GM10248 (cell line): ENCODE measurements at regions of chr20 and their contacts with region 1.

Region 1: DNA sequence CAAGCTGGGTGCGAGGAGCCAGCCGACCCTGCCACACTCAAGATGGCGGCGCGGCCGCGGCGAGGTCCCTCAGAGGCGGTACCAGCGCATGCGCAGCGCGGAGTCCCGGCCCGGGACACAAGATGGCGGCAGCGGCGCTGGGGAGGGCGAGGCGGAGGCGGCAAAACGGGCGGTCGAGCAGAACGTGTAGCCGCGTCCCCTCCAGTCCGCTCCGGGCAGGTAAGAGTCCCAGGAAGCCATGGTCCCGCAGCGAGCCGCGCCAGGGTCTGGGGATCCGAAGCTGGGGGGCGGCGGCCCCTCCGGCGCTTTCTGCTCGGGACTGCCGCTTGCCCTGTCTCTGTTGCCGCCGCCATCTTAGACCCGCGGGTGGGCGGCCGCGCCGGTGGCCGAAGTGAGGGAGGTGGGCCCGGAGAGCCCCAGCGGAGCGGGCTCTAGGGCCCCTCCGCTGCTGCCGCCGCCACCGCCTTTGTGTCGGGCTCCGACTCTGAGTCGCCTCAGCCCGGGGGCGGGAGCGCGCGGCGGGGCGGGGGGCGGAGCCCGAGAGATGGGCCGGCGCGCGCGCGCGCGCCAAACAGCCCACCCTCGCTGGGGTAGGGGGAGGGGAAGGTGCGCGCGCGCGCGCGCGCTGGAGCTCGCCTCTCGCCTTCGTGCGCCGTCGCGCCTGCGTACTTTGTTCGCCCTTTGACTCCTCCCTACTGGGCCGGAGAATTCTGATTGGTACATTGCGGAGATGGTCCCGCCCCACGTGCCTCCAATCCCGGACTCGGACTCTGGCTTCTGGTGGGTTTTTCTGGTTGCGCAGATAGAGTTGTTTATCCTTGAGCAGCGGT is at the start of gene PCIF1:
- DNase-seq: peak; percentile 99
- CTCF ChIP-seq: no peak

Region 2: GRCh38 chr20:45880988-45881788 is 53.6 kb before region 1 on chr20 and contains the start of gene ZSWIM1:
- CTCF ChIA-PET with region 1: no interaction called
- POLR2A ChIA-PET with region 1: interaction called, 11 read pairs
- DNase-seq: peak; percentile 98
- CTCF ChIP-seq: no peak

Region 3: DNA sequence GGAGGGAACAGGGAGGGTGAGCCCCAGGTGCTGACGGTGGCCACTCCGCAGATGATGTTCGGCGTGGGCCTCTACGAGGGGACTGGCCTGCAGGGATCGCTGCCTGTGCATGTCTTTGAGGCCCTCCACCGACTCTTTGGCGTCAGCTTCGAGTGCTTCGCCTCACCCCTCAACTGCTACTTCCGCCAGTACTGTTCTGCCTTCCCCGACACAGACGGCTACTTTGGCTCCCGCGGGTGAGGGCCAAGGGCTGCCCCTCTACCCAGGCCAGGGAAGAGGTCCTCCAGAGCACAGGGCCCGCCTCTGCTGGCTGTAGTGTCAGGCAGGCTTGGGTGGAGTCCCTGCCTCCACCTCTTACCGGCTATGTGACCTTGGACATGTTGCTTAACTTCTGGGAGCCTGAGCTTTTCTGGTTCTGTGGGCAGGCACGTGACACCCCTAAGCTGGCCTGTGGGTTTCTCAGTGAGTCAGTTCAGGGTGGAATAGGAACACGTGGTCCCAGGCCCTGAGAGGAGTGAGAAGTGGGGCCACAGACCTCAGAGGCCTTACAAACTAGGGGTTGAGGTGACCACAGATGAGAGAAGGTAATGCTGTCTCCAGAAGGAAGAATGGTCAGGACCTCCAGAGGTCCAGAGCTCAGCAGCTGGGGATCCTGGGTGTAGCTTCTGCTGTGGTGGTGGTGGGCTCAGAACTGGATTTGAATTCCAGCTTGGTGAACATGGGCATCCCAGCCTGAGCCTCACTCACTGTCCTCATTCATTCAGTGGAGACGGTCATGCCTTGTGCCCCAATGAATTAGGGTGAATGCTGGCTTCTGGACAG is 11.6 kb after region 1 on chr20:
- CTCF ChIA-PET with region 1: interaction called, 5 read pairs
- POLR2A ChIA-PET with region 1: interaction called, 11 read pairs
- DNase-seq: no peak
- CTCF ChIP-seq: no peak

Region 4: GRCh38 chr20:46253391-46253790 is 318.6 kb after region 1 on chr20:
- CTCF ChIA-PET with region 1: no interaction called
- POLR2A ChIA-PET with region 1: no interaction called
- DNase-seq: no peak
- CTCF ChIP-seq: no peak